HAP-1 (cell line): ENCODE measurements at regions of chr9 and their contacts with region 1.

Region 1: DNA sequence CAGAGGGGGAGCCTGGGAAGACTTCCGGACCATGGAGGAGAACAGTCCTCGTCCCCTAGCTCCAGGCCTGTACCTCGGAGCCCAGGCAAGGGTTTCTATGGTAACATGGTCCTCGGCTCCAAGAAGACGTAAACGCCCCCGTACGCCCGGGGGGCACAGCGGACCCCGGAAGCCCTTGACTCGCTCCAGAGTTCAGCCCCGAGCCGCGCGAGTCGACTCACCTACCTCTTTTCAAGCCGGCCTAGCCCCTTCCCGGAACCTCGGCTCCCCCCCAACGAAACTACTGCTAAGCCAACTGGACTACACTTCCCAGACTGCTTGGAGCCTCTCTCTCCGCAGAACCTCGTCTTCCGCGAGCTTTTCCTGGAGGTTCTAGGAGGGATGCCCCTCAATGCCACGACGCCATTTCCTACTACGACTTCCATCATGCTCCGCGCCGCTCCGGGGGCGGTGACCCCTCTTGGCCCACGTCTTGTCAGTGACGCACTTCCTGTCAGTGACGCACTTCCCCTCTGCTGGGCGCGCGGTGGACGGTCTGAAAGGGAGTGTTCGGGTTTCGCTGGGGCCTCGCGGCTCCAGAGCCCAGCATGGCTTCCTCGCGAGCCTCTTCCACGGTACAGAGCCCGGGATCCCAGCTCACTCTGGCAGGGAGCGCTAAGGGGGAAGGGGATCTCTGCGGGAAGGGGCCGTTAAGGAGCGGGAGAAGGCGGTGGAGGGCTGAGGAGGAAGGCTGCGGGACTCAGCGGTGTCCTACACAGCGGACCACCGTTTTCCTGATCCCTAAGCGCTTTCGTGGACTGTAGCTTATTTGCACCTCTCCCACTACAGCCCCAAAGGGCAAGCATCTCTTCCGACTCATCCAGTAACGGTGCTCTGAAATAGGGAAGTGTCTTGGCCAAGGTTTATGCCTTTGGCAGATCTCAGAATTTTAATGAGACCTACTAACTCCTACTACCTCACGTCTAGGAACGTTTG is at the starts of genes CDC26 and PRPF4:
- DNase-seq: peak; percentile 95 to 98
- H3K4me3 ChIP-seq: peak within 1 kb of the TSS; percentile 95
- H3K4me1 ChIP-seq: peaks cover 13% of the 10 kb centered on the region
- H3K27me3 ChIP-seq: no peaks in the 10 kb centered on the region

Region 2: DNA sequence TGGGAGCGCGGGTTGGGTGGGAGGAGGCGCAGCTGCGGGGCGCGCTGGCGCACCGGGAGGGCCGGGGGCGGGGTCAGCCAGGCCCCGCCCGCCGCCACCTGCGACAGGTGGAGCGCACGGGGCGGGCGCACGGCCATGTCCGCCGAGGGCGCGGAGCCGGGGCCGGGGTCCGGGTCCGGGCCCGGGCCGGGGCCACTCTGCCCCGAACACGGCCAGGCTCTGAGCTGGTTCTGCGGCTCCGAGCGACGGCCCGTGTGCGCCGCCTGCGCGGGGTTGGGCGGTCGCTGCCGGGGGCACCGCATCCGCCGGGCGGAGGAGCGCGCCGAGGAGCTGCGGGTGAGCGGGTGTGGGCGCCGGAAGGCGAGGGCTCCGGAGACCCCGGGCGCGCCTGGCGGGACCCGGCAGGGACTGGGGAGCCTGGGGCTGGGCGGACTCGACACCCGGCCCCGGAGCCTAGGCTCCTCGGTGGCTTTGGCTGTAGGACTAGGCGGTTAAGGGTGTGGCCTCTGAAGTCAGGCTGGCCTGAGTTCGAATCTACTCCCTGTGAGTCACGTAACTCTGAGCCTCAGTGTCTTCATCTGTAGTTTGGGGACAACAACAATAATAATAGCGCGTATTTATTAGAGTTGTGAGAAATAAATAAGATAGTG is 74.1 kb after region 1 on chr9 and contains the start of gene BSPRY:
- in situ Hi-C with region 1: no loop called
- DNase-seq: peak; percentile 26 to 39
- H3K4me3 ChIP-seq: peak within 1 kb of the TSS; percentile 29
- H3K4me1 ChIP-seq: no peaks in the 10 kb centered on the region
- H3K27me3 ChIP-seq: peaks cover 45% of the 10 kb centered on the region

Region 3: DNA sequence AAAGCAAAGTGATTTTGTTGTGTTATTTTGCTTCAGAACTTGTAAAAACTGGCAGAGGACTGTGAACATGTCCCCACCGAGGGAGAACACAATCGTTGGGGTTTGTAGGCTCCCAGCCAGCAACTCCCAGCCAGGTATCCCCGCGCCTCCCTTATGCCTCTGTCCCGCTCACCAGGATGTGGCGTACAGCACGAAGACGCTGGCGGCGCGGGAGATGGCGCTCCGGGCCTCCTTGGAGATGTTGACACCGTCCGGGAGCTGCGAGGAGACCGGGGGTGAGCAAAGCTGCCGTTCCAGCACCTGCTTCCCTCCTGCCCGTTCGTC is 134.4 kb after region 1 on chr9:
- in situ Hi-C with region 1: loop called (anchors 5 kb)
- DNase-seq: no peak
- H3K4me3 ChIP-seq: peak overlapping the region; percentile 95
- H3K4me1 ChIP-seq: peaks cover 6% of the 10 kb centered on the region
- H3K27me3 ChIP-seq: no peaks in the 10 kb centered on the region

Region 4: DNA sequence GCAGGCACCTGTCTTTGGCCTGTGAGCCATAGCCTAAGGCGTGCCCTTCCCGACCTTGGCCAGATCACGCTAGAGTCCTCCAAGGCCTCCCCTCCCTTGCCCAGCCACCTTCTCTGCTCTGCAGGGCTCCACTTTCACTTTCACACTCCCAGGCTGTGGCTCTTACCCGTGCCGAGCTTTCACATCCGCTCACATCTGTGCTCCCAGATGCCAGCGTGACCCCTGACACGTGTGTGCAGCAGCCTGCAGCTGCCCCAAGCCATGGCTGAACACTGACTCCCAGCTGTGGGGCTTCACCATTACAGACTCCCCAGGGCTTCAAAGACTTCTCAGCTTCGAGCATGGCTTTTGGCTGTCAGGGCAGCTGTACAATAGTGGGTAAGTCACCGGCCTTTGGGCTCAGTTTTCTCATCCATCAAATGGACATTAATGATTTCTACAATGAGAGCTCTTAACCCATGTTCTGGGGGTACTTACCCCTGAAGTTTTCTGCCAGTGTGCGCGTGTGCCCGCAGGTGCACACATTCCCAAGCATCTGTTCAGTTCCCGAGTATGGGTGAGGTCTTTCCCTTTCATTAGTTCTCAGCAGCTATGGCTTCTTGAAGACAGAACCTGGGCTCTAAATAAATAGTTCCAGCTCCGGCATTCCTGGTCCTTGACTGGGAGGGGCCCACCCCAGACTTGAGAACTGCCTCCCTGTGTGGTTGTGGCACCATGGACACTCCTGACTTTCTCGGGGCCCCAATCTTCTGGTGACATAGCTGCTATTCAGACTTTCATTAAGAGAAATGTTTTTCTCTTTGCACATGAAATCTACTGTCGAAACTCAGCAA is 306.6 kb after region 1 on chr9:
- in situ Hi-C with region 1: loop called (anchors 10 kb)
- DNase-seq: no peak
- H3K4me3 ChIP-seq: no peak overlapping the region
- H3K4me1 ChIP-seq: no peaks in the 10 kb centered on the region
- H3K27me3 ChIP-seq: no peaks in the 10 kb centered on the region

Region 5: GRCh38 chr9:114460513-114461199 is 1185.2 kb after region 1 on chr9:
- in situ Hi-C with region 1: no loop called
- DNase-seq: peak in 1 of 2 experiments; percentile 5
- H3K4me3 ChIP-seq: no peak overlapping the region
- H3K4me1 ChIP-seq: peaks cover 8% of the 10 kb centered on the region; the same call in 1 of the 2 replicates
- H3K27me3 ChIP-seq: 0 out of 2 replicates have a peak, but pooled peaks cover 2% of the 10 kb centered on the region